Gastrocnemius medialis (tissue), 4 donors: ENCODE measurements at regions of chr18 and their contacts with region 1.

Region 1: DNA sequence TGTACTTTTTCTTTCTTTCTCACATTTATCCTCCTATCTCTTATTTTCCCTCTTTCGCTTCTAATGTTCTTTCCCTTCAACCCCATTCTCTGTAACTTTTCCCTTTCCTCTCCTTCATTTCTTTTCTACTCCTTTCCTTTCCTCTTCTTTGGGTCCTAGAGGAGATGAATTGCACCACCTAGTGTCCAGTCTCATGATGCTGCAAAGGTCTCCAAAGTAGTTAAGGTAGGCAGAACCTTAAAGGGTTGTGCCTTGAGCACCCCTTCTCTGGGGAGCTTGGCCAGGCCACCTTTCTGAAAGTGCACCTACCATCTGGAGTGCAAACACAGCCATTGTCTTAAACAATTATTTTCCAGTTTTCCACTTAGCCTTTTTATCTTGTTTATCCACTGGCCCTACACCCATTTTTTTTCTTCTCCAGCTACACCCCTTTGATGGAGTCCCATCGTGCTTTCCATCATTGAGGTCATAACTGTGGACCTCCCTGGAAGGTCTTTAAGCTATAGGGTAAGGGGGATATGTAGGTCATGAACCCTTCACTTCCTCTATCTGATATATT is 156.0 kb downstream of the ESCO1 start:
- DNase-seq: peak in 1 of 2 donors; percentile 42
- ATAC-seq: peak; percentile 45 to 68
- H3K4me3 ChIP-seq: peak overlapping the region in 1 of 4 donors; percentile 10
- H3K27ac ChIP-seq: peak overlapping the region in 3 of 4 donors; percentile 90 to 96 (median 92)
- H3K4me1 ChIP-seq: peaks cover 18 to 66% of the 10 kb centered on the region in 2 donors
- H3K27me3 ChIP-seq: no peaks in the 10 kb centered on the region
- CTCF ChIP-seq: peak; percentile 52 to 62 (median 53)
- POLR2A ChIP-seq: no peak

Region 2: DNA sequence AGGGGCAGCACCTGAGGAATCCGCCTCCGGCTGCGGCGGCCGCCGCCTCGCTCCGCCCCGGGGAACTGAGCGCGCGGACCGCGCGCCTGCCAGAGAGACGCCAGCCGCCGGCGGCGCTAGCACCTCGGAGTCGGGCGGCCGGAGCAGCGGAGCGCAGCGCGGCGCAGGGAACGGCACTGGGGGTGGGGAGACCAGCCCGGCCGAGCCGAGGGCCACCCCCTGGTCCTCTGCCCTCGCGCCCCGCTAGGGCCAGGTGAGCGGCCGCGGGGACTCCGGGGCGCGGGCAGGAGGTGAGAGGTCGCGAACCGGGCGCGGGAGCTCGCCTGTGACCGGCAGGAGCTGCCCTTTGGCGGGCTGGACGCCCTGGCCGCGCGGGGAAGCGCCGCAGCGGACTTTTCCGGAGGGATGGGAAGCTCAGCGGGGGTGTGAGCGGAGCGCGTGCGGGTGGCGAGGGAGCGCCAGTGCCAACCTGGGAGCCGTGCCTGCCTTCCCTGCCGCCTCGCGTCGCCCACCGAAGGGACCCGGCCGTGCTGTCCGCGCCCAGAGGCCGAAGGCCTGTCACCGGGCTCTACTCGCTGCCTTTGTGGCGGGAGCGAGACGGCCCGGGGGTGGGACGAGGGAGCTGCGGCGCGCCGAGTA is 202.3 kb before region 1 on chr18 and contains the start of gene GREB1L:
- in situ Hi-C with region 1: no loop called
- intact Hi-C with region 1: loop called (anchors 2 kb)
- DNase-seq: peak; percentile 17 to 45
- ATAC-seq: peak; percentile 80 to 83
- H3K4me3 ChIP-seq: peak within 1 kb of the TSS; percentile 59 to 80 (median 68)
- H3K27ac ChIP-seq: peak within 1 kb of the TSS; percentile 57 to 76 (median 70)
- H3K4me1 ChIP-seq: peaks cover 0 to 4% of the 10 kb centered on the region in 2 donors
- H3K27me3 ChIP-seq: peaks cover 0 to 8% (median 0%) of the 10 kb centered on the region in 3 donors
- CTCF ChIP-seq: peak in 1 of 5 experiments; percentile 13
- POLR2A ChIP-seq: peak in 1 of 2 donors; percentile 28
- total RNA-seq, gene GREB1L: 4.4 to 14.4 (median 7.4) TPM

Region 3: DNA sequence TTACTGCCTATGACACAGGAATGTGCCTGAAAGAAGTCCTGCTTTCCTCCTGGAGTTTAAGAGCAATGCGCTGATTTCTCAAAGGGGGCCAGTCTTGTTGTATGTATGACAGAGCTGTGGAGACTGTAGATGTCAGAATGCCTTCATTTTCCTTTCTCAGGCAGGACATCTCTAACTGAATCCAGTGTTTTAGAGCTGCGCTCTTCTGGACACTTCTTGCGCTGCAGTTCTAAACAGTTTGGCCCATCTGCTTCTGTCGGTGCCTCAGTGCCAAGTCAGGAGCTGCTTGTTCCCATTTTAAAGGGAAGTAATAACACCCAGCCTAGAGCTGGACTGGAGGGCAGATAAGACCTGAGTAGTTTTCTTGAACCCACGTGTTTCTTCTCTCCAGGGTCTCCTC is 64.5 kb after region 1 on chr18:
- in situ Hi-C with region 1: no loop called
- intact Hi-C with region 1: loop called (anchors 10 kb)
- DNase-seq: no peak
- ATAC-seq: peak; percentile 27 to 42
- H3K4me3 ChIP-seq: no peak overlapping the region
- H3K27ac ChIP-seq: peak overlapping the region in 2 of 4 donors; percentile 2 to 3
- H3K4me1 ChIP-seq: peaks cover 0 to 6% of the 10 kb centered on the region in 2 donors
- H3K27me3 ChIP-seq: no peaks in the 10 kb centered on the region
- CTCF ChIP-seq: no peak
- POLR2A ChIP-seq: no peak

Region 4: DNA sequence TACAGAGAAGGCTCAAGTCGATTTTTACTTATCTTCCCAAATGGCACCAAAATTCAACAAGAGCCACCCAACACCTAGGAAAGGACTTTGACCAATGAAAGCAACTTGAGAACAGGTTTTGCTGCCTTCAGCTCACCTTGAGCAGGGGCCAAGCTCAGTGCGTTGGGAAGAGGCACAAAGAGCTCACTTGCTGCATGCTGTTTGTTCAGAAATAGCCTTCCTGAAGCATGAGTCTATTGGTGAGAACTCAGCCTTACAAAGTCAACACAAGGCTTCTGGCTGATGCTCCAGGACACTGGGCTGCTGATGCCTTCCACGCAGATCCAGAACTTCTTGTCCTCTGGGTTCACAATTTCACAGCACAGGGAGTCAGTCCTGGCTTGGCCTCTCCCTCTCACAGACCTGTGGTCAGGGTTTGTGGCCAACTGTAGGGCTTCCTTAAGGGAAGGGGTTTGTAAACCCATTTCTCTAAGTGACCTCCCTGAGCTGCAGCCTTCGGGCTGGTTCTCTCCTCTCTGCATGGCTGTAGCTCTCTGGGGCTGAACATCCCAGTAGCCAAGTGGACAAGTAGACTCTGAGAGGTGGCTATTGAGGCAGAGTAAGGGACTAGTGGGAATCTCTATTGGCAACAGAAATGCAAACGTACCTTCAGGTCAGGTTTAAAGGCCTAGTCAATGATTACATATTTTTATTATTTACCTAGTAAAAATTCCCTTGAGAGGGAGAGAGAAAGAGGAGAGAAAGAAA is 600.1 kb after region 1 on chr18:
- in situ Hi-C with region 1: no loop called
- intact Hi-C with region 1: no loop called
- DNase-seq: no peak
- ATAC-seq: no peak
- H3K4me3 ChIP-seq: no peak overlapping the region
- H3K27ac ChIP-seq: no peak overlapping the region
- H3K4me1 ChIP-seq: no peaks in the 10 kb centered on the region
- H3K27me3 ChIP-seq: no peaks in the 10 kb centered on the region
- CTCF ChIP-seq: no peak
- POLR2A ChIP-seq: no peak